ENCODE measurements at regions of chr14 and their contacts with region 1.

Region 1: DNA sequence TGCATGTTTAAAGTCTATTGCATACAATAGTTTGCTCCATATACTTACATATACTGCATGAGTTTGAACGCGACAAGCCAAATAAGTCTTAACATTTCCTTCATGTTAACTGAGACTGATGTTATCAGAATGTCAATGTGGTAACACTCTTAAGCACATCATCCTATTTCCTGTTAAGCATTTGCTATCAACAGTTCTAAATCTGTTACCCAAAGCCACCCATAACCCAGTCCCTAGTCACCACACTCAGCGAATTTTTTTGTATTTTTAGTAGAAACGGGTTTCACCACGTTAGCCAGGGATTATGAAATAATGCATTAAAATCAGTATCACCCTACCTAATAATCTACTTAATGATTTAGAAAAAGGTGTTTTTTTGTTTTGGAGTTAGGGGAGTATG is 39.4 kb downstream of the HNRNPC start:
- DNase-seq: no peak
- ATAC-seq: peak; percentile 82
- H3K4me3 Mint-ChIP-seq: peak overlapping the region; percentile 50
- H3K27ac Mint-ChIP-seq: peak overlapping the region; percentile 93
- H3K4me1 Mint-ChIP-seq: peaks cover 79% of the 10 kb centered on the region
- H3K27me3 Mint-ChIP-seq: no peaks in the 10 kb centered on the region

Region 2: GRCh38 chr14:21191809-21192446 is 37.9 kb before region 1 on chr14:
- CTCF ChIA-PET with region 1: no interaction called
- DNase-seq: peak; percentile 87
- ATAC-seq: peak; percentile 98
- H3K4me3 Mint-ChIP-seq: peak overlapping the region; percentile 56
- H3K27ac Mint-ChIP-seq: peak overlapping the region; percentile 46
- H3K4me1 Mint-ChIP-seq: peaks cover 11% of the 10 kb centered on the region
- H3K27me3 Mint-ChIP-seq: peaks cover 19% of the 10 kb centered on the region

Region 3: DNA sequence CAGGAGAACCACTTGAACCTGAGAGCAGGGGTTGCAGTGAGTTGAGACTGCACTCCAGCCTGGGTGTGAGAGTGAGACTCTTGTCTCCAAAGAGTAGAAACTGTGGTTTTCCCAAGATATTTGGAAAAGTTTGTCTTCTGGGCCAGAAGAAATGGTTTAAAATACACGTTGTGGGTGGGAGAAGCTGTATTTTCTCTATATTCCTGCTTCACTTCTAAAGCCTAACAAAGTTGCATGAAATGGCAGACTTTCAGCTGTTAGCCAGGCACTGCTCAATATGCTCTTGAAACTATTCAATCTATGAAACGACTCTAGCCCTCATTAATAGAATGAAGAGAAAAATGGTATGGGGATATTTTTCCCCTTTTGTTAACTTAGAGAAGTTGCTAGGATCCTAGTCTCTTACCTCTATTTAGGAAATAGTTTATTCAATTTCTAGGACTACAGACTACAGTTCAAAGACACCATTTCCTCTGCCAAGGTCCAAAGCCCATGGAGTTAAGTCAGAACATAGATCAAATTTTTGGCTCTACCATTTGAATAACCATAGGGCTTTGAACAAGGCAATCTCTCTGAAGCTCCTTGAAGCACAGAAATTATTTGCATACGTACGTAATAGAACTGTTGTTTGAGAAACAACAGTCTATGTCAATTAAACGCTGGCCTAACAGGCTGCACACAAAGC is 24.7 kb before region 1 on chr14:
- CTCF ChIA-PET with region 1: no interaction called
- DNase-seq: no peak
- ATAC-seq: no peak
- H3K4me3 Mint-ChIP-seq: no peak overlapping the region
- H3K27ac Mint-ChIP-seq: no peak overlapping the region
- H3K4me1 Mint-ChIP-seq: peaks cover 2% of the 10 kb centered on the region
- H3K27me3 Mint-ChIP-seq: no peaks in the 10 kb centered on the region

Region 4: DNA sequence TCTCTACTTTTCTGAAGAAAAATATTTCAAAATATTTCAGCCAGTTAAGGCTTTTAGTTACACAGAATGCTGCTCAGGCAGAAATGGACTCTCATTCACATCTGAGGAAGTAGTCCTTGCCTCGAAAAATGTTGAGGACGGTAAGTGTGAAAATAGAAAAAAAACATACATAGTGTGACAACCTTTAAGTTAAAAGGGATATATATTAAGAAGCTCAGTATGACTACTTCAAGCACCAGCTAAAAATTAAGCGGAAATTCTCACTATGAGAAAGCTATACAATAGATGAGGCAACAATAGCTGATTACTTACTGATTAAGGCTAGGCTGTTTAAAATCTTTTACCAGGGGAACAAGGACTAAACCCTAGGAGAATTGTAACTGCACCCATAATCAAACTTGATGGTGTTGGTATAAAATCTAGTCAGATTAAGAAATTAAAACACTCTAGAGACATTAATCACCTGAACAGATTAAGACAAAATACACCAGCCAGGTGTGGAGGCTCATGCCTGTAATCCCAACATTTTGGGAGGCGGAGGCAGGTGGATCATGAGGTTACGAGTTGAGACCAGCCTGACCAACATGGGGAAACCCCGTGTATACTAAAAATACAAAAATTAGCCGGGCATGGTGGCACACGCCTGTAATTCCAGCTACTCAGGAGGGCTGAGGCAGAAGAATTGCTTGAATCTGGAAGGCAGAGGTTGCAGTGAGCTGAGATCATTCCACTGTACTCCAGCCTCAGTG is 14.5 kb before region 1 on chr14:
- CTCF ChIA-PET with region 1: interaction called, 10 read pairs
- DNase-seq: no peak
- ATAC-seq: peak; percentile 60
- H3K4me3 Mint-ChIP-seq: peak overlapping the region; percentile 7
- H3K27ac Mint-ChIP-seq: peak overlapping the region; percentile 70
- H3K4me1 Mint-ChIP-seq: peaks cover 57% of the 10 kb centered on the region
- H3K27me3 Mint-ChIP-seq: no peaks in the 10 kb centered on the region

Measured in activated CD8-positive, alpha-beta memory T cell treated with anti-CD3 and anti-CD28 coated beads, Interleukin-2, amount 10 ng/mL, durations not matched to agents 7 days and 5 days (primary cell).